Right cardiac atrium (tissue), 5 donors: ENCODE measurements at regions of chr19 and their contacts with region 1.

Region 1: DNA sequence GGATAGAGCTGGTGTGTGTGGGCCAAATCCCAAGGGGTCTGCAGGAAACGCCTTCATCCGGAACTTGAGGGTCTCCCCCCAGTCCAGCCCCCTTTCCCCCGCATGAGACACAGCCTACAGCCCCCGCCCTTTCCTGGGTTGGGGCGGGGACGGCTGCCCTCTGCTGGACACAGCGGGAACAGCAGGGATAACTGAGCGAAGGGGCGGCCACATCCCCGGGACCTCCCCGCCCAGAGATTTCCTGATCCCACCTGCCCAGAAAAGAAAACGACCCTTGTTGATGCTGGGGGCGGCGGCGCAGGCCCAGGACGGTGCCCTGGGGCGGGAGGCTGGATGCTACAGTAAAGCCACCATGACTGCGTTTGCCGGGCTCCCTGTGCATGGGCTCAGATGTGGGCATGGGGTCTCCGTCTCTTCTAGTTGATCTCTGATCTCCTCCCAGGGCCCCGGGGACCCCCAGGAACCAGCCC is 14.2 kb downstream of the ONECUT3 start:
- DNase-seq: peak in 2 of 3 donors; percentile 64 to 71
- ATAC-seq: peak; percentile 55 to 71
- H3K4me3 ChIP-seq: no peak overlapping the region
- H3K27ac ChIP-seq: no peak overlapping the region
- H3K4me1 ChIP-seq: no peaks in the 10 kb centered on the region
- H3K27me3 ChIP-seq: no peaks in the 10 kb centered on the region

Region 2: DNA sequence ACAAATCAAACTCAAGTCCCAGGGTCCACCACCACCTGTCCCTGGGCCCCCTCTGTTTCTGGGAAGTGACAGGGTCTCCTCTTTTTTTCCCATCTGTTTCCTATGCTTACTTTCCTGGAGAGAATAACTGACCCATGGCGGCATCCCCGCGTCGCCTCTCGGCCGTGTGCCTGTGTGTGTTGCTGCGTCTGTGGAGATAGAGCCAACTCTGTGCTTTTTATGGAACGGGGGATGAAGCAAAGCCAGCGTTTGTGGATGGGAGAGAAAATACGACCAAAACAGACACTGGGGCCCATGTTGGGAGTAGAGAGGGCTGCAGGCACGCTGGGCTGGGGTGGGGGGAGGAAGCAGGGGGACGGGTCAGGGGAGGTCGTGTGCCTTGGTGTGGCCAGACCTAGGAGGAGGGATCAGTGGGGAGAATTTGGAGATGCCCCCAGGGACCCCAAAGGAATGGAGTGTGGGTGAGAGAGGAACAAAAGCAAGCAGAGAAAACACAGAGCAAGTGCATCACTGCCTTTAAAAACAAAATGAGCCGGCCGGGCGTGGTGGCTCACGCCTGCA is 227.1 kb before region 1 on chr19:
- intact Hi-C with region 1: loop called (anchors 2 to 10 kb)
- DNase-seq: peak in 2 of 3 donors; percentile 71 to 74
- ATAC-seq: peak; percentile 57 to 76
- H3K4me3 ChIP-seq: no peak overlapping the region
- H3K27ac ChIP-seq: peak overlapping the region; percentile 42
- H3K4me1 ChIP-seq: no peaks in the 10 kb centered on the region
- H3K27me3 ChIP-seq: no peaks in the 10 kb centered on the region

Region 3: GRCh38 chr19:1624458-1624857 is 143.0 kb before region 1 on chr19:
- intact Hi-C with region 1: loop called in 1 of 4 experiments (anchors 10 kb)
- DNase-seq: peak; percentile 51 to 78 (median 72)
- ATAC-seq: peak; percentile 15 to 72
- H3K4me3 ChIP-seq: no peak overlapping the region
- H3K27ac ChIP-seq: no peak overlapping the region
- H3K4me1 ChIP-seq: no peaks in the 10 kb centered on the region
- H3K27me3 ChIP-seq: no peaks in the 10 kb centered on the region

Region 4: DNA sequence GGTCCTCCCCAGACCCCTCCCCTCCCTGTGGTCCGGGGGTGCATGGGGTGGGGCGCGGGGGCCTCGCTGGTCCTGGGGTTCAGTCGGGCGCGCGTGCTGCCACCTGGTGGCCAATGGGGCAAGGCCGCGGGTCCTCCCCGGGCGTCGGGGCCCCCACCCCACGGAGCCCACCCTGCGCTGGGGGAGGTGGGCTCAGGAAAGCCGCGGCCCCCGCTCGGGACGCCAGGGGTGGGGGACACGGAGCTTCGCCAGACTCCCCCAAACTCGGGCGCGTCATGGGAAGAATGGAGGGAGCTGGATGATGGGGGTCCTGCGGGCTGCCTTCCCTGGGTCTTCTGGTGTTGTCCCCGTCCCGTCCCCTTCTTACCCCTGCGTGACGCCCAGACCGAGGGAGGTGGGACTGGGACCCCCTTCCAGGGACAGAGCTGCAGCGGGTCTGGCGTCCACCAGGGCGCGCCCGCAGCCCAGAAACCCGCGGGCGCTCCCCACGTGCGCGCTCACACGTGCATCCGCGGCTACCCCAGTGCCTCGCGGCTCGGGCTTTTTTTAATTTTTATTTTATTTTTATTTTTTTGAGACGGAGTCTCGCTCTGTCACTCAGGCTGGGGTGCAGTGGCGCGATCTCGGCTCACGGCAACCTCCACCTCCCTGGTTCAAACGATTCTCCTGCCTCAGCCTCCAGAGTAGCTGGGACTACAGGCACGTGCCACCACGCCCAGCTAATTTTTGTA is 95.3 kb before region 1 on chr19:
- intact Hi-C with region 1: loop called in 1 of 4 experiments (anchors 5 kb)
- DNase-seq: peak in 2 of 3 donors; percentile 72 to 78
- ATAC-seq: peak; percentile 60 to 63
- H3K4me3 ChIP-seq: no peak overlapping the region
- H3K27ac ChIP-seq: no peak overlapping the region
- H3K4me1 ChIP-seq: no peaks in the 10 kb centered on the region
- H3K27me3 ChIP-seq: no peaks in the 10 kb centered on the region